ENCODE measurements at regions of chr6 and their contacts with region 1.

Region 1: GRCh38 chr6:31901953-31902643 is at the start of gene ZBTB12:
- DNase-seq: peak; percentile 90 to 91
- ATAC-seq: peak; percentile 81 to 87 (median 85)
- H3K4me3 ChIP-seq: peak within 1 kb of the TSS; percentile 42 to 84 (median 64)
- H3K27ac ChIP-seq: peak within 1 kb of the TSS; percentile 65 to 92 (median 85)
- H3K4me1 ChIP-seq: peaks cover 3 to 46% (median 28%) of the 10 kb centered on the region in 9 donors
- H3K27me3 ChIP-seq: no peaks in the 10 kb centered on the region
- CTCF ChIP-seq: no peak
- total RNA-seq, gene ZBTB12: 1.5 to 4.9 (median 2.8) TPM

Region 2: DNA sequence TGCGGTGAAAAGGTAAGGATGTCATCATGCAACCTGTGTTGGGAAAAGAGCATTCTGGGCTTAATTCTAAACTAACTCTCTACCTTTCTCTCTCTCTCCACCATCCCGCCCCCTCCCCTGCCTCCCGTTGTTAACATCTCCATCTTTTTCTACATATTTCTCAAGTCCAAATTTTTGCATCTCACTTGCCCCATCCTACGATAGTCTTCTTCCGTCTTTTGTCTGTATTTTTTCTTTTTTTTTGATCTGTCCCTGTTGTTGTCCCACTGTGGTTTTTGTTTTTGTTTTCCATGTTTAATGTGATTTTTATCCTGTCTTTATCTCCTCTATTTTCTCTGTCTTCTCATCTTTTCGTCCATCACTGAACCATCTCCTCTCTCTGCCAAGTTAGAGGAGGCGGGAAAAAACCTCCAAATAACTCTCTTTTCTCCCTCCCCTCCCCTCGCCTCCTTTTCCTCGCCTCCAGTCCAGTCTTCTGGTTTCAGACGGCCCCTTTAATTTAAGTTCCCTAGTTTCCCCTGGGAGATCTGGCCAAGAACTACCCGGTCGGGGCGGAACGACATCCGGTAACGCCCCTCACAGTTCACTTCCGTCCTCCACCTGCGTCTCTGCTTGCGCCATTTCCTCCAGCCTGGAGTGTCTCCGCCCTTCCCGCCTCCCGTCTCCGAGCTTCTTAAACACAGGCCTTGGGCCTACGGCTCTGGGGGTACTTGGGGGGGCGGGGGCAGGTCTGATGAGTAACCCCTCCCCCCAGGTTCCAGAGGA is 355.0 kb before region 1 on chr6 and contains the start of gene NFKBIL1:
- intact Hi-C with region 1: loop called in 1 of 10 experiments (anchors 5 kb)
- DNase-seq: peak; percentile 92 to 98
- ATAC-seq: peak; percentile 94 to 98 (median 98)
- H3K4me3 ChIP-seq: peak within 1 kb of the TSS; percentile 30 to 63 (median 56)
- H3K27ac ChIP-seq: peak within 1 kb of the TSS; percentile 69 to 95 (median 91)
- H3K4me1 ChIP-seq: peaks cover 10 to 51% (median 25%) of the 10 kb centered on the region in 9 donors
- H3K27me3 ChIP-seq: no peaks in the 10 kb centered on the region
- CTCF ChIP-seq: peak in 2 of 9 donors; percentile 3 to 7
- total RNA-seq, gene NFKBIL1: 9.7 to 15.8 (median 11.7) TPM

Region 3: DNA sequence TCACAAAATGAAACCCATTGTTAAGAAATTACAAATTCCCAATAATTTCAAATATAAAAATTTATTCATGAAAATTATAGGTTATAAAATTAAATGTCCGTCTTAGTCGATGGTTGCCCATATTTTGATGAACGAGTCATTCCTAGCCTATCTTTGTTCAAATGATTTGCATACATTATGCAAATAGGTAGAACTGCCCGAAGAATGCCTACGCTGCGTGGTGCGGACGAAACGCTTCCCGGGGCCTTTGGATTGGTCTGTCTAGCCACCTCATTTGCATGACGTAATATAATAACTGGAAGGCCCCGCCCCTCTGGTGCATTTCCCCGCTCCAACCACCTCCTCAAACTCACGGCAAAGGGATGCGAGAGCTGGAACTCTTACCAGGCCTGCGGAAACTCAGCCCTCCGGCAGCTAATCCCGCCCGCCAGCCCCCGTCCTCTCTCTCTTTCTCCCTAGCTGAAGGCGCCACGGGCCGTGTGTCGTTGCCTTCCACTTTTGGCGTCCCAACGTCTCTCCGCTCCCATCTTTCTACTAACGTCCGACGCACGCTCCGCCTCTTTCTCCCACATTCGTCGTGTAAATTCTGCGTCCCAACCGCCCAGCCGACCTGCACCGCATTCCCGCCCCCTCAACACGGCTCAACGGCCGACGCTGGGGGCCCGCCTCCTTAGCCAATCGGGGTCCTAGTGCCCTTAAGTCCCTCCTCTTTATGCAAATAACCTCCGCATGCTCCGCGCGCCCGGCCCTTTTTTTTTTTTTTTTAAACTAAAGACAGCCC is 282.1 kb before region 1 on chr6:
- intact Hi-C with region 1: loop called in 1 of 10 experiments (anchors 5 kb)
- DNase-seq: peak; percentile 97 to 98
- ATAC-seq: peak; percentile 93 to 97 (median 96)
- H3K4me3 ChIP-seq: peak overlapping the region; percentile 68 to 99 (median 80)
- H3K27ac ChIP-seq: peak overlapping the region; percentile 89 to 99 (median 96)
- H3K4me1 ChIP-seq: peaks cover 0 to 24% (median 21%) of the 10 kb centered on the region in 9 donors
- H3K27me3 ChIP-seq: no peaks in the 10 kb centered on the region
- CTCF ChIP-seq: no peak

Region 4: GRCh38 chr6:31862344-31863227 is 39.5 kb before region 1 on chr6 and contains the start of gene NEU1:
- intact Hi-C with region 1: loop called in 1 of 10 experiments (anchors 2 kb)
- DNase-seq: peak; percentile 99 to 100
- ATAC-seq: peak; percentile 97 to 99 (median 98)
- H3K4me3 ChIP-seq: peak within 1 kb of the TSS; percentile 65 to 93 (median 78)
- H3K27ac ChIP-seq: peak within 1 kb of the TSS; percentile 8 to 93 (median 84)
- H3K4me1 ChIP-seq: peaks cover 8 to 29% (median 21%) of the 10 kb centered on the region in 9 donors
- H3K27me3 ChIP-seq: no peaks in the 10 kb centered on the region
- CTCF ChIP-seq: no peak
- total RNA-seq, gene NEU1: 18.1 to 32.4 (median 22.3) TPM

Region 5: DNA sequence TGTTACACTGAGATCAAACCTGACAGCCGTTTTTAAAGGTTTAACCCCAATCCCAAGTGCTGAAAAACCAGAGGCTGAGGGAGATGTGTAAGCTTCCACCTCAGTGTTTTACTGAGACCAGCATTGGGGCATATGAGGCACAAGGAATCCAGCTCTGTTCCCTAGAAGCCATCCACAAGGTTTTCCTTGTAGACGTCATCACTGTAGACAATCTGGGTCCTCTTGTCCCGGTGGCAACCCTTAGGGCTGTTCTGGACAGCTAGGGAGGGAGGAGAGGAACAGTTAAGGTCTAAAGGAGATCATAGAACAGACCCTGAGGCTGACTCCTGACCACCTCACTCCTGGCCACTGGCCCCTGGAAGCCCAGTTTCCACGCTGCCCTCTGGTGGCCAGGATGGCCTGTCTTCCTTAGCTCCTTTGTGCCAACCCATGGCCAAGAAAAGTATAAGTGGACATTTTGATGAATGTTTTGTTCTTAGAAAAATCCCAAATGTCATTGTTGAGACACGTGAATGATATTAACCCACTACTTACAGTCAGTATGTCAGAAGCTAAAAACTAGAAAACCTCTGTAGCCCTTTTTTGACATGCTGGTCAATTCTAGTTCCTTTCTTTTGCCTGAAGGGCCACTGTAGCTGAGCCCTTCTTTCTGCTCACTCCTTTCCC is 50.2 kb after region 1 on chr6:
- intact Hi-C with region 1: loop called in 8 of 10 experiments (anchors 5 to 10 kb)
- DNase-seq: peak in 1 of 2 donors; percentile 62
- ATAC-seq: peak in 7 of 8 donors; percentile 23 to 72 (median 68)
- H3K4me3 ChIP-seq: no peak overlapping the region
- H3K27ac ChIP-seq: peak overlapping the region in 1 of 10 donors; percentile 11
- H3K4me1 ChIP-seq: peaks cover 0 to 2% (median 0%) of the 10 kb centered on the region in 9 donors
- H3K27me3 ChIP-seq: no peaks in the 10 kb centered on the region
- CTCF ChIP-seq: peak; percentile 46 to 86 (median 70)

Region 6: DNA sequence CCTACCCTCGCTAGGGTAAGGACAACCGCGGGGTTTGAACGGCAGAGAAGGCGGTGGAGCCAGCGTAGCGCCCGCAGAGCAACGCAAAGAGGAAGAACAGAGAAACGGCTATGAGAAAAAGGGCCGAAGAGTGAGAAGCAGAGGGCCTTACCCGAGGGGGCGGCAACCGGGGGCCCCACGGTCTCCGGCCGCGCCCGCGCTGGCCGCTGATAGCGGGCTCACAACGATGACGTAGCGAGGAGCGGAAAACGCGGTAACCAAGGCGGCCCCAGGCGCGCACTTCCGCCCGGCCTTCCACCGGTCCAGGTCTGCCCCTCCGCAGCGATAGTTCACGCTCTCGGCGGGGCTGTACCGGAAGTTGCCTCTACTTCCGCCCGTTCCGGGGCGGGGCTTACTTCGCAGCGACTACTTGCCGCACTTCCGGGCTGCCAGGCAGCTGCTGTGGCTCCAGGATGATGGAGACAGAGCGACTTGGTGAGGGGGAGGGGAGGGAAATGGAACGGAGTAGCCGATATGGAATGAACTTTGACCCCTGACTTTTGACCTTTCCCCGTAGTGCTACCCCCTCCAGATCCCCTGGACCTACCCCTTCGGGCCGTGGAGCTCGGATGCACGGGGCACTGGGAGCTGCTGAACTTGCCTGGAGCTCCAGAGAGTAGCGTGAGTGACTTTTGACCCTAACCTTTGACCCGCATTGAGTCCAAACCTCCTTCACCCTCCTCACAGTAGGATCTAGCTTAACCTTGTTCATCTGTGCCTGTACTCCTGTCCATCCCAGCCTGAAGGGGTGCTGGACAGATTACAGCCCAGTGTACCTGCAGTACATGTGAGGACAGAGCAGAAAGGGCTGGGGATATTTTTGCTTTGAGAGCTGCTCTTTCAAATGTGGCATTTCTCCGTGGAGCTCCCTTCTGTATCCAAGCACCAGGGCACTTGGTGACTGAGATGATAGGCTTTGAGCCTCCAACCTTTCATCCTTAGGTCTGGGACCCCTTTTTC is 56.9 kb after region 1 on chr6 and contains the starts of genes NELFE and SKIC2:
- intact Hi-C with region 1: loop called in 8 of 10 experiments (anchors 5 to 10 kb)
- DNase-seq: peak; percentile 98
- ATAC-seq: peak; percentile 98 to 100 (median 100)
- H3K4me3 ChIP-seq: peak within 1 kb of the TSS; percentile 60 to 99 (median 90)
- H3K27ac ChIP-seq: peak within 1 kb of the TSS; percentile 54 to 95 (median 90)
- H3K4me1 ChIP-seq: peaks cover 6 to 27% (median 20%) of the 10 kb centered on the region in 9 donors
- H3K27me3 ChIP-seq: no peaks in the 10 kb centered on the region
- CTCF ChIP-seq: no peak
- total RNA-seq, gene NELFE: 38.2 to 52.8 (median 45.7) TPM
- total RNA-seq, gene SKIC2: 21.8 to 45.5 (median 32.2) TPM